K562 (cell line): ENCODE measurements at regions of chr6 and their contacts with region 1.

Region 1: GRCh38 chr6:52361945-52362442 is at the start of gene PAQR8:
- DNase-seq: peak; percentile 84 to 98 (median 96)
- ATAC-seq: peak; percentile 92
- H3K4me3 ChIP-seq: peak within 1 kb of the TSS; percentile 85
- H3K27ac ChIP-seq: peak within 1 kb of the TSS; percentile 78
- H3K4me1 ChIP-seq: peaks cover 20 to 33% of the 10 kb centered on the region in 2 experiments
- H3K27me3 ChIP-seq: no peaks in the 10 kb centered on the region
- CTCF ChIP-seq: no peak
- EP300 ChIP-seq: no peak; the same call in 1 of the 2 replicates
- POLR2A ChIP-seq: peak; percentile 66; the same call in 1 of the 2 replicates
- RAD21 ChIP-seq: no peak
- polyA plus RNA-seq, gene PAQR8: 1.4 TPM

Region 2: DNA sequence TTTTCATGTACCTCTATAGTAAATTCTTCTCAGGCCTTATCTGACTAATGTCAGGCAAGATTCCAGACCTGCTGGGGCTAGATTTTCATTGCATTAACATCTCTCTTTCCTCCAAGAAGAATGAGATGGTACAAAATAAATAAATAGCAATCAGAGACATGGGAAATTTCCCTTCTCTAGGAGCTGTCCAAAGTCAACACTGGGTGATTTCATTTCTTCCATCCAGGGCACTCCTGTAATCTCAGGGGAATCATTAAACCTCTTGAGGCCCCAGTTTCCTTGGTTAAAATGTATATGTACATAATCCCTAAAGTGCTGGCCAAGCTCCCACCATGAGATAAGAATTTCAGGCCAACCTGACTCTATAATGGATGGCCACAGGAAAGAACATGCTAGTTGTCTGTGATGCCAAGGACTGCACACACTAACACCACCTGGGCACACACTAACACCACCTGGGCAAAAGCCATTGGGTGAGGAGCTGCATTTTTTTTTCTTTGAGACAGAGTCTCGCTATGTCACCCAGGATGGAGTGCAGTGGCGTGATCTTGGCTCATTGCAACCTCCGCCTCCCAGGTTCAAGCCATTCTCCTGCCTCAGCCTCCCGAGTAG is 118.6 kb before region 1 on chr6:
- CTCF ChIA-PET with region 1: no interaction called
- POLR2A ChIA-PET with region 1: no interaction called
- in situ Hi-C with region 1: no loop called
- intact Hi-C with region 1: no loop called
- DNase-seq: no peak
- ATAC-seq: no peak
- H3K4me3 ChIP-seq: no peak overlapping the region
- H3K27ac ChIP-seq: no peak overlapping the region
- H3K4me1 ChIP-seq: no peaks in the 10 kb centered on the region
- H3K27me3 ChIP-seq: peaks cover 23 to 34% of the 10 kb centered on the region in 2 experiments; a peak in 4 of 5 replicates
- CTCF ChIP-seq: no peak
- EP300 ChIP-seq: no peak
- POLR2A ChIP-seq: no peak
- RAD21 ChIP-seq: no peak

Region 3: DNA sequence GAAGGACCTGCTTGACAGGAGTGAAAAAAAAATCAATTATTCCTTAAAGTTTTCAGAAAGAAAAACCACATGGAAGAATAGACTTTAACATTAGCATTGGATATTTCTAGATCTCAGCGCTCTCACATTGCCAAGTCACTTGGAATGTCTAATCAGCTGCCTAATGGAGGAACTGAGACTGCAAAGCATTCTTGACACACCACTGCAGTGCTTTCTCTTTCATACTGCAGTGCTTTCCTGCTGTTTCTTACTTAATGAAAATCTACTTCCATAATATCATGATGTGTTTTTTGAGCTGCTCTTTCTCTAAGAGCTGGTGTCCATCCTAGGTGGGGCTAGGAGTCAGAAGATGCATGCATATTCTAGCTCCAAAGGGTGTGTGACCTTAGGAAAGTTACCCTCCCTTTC is 57.0 kb before region 1 on chr6:
- CTCF ChIA-PET with region 1: no interaction called
- POLR2A ChIA-PET with region 1: no interaction called
- in situ Hi-C with region 1: no loop called
- intact Hi-C with region 1: loop called (anchors 5 kb)
- DNase-seq: peak in 1 of 4 experiments; percentile 37
- ATAC-seq: peak; percentile 30
- H3K4me3 ChIP-seq: no peak overlapping the region
- H3K27ac ChIP-seq: peak overlapping the region; percentile 55; the same call in 1 of the 3 replicates
- H3K4me1 ChIP-seq: peaks cover 42 to 47% of the 10 kb centered on the region in 2 experiments
- H3K27me3 ChIP-seq: no peaks in the 10 kb centered on the region
- CTCF ChIP-seq: no peak
- EP300 ChIP-seq: no peak
- POLR2A ChIP-seq: no peak
- RAD21 ChIP-seq: no peak

Region 4: DNA sequence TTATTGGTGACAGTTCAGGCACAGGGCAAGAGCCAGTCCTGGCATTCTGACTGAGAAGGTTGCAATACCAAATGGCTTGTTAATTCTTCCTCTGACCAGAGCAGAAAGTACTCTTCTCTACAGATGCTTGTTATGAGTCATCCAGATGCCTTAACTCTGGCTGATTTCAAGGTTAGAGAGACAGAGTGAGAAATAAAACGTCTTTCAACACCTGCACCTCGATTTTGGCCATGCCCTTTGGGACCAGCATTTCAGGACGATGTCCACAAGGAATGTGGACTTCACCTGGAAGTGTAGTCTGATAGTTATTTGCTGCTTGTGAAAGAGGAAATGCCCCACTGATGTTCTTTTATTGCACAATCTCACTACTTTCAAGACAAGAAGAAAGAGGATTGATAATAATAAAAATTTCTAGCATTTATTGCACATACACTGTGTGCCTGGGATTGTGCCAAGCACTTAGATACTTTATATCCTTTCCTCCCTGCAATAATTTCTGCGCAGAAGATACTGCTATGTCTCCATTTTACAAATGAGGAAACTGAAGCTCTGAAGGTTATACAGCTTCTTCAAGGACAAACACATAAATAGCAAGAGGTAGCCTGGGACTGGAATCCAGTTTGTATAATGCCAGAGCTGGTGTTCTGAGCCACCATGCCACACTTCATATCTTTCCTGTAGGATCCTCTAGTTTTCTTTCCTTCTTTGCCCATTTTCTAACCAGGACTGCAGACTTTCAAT is 44.0 kb before region 1 on chr6:
- CTCF ChIA-PET with region 1: no interaction called
- POLR2A ChIA-PET with region 1: no interaction called
- in situ Hi-C with region 1: no loop called
- intact Hi-C with region 1: loop called (anchors 5 kb)
- DNase-seq: no peak
- ATAC-seq: peak; percentile 66
- H3K4me3 ChIP-seq: no peak overlapping the region
- H3K27ac ChIP-seq: no peak overlapping the region
- H3K4me1 ChIP-seq: peaks cover 3 to 20% of the 10 kb centered on the region in 2 experiments; a peak in 4 of 5 replicates
- H3K27me3 ChIP-seq: no peaks in the 10 kb centered on the region
- CTCF ChIP-seq: no peak
- EP300 ChIP-seq: no peak
- POLR2A ChIP-seq: no peak
- RAD21 ChIP-seq: no peak